ENCODE measurements at regions of chr11 and their contacts with region 1.

Region 1: GRCh38 chr11:42657169-42657568 is 654.6 kb upstream of the API5 start:
- DNase-seq: no peak
- ATAC-seq: no peak
- H3K4me3 ChIP-seq: no peak overlapping the region
- H3K27ac ChIP-seq: no peak overlapping the region
- H3K4me1 ChIP-seq: no peaks in the 10 kb centered on the region
- H3K27me3 ChIP-seq: no peaks in the 10 kb centered on the region
- CTCF ChIP-seq: no peak
- POLR2A ChIP-seq: no peak
- RAD21 ChIP-seq: no peak

Region 2: DNA sequence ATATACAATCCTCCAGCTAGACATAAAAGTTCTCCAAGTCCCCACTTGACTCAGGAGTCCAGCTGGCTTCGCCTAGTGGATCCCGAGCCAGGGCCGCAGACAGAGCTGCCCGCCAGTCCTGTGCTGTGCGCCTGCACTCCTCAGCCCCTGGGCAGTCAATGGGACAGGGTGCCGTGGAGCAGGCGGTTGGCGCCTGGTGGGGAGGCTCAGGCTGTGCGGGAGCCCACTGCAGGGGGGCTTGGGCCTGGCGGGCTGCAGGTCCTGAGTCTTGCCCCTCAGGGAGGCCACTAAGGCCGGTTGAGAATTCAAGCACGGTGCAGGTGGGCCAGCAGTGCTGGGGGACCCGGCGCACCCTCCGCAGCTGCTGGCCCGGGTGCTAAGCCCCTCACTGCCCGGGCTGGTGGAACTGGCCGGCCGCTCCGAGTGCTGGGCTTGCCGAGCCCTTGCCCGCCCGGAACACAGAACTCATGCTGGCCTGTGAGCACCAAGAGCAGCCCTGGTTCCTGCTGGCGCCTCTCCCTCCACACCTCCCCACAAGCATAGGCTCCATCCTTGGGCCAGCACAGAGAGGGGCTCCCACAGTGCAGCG is 312.9 kb before region 1 on chr11:
- CTCF ChIA-PET with region 1: no interaction called
- POLR2A ChIA-PET with region 1: no interaction called
- RAD21 ChIA-PET with region 1: no interaction called
- intact Hi-C with region 1: no loop called
- DNase-seq: no peak
- ATAC-seq: no peak
- H3K4me3 ChIP-seq: no peak overlapping the region
- H3K27ac ChIP-seq: no peak overlapping the region
- H3K4me1 ChIP-seq: no peaks in the 10 kb centered on the region
- H3K27me3 ChIP-seq: no peaks in the 10 kb centered on the region
- CTCF ChIP-seq: no peak
- POLR2A ChIP-seq: no peak
- RAD21 ChIP-seq: no peak

Region 3: DNA sequence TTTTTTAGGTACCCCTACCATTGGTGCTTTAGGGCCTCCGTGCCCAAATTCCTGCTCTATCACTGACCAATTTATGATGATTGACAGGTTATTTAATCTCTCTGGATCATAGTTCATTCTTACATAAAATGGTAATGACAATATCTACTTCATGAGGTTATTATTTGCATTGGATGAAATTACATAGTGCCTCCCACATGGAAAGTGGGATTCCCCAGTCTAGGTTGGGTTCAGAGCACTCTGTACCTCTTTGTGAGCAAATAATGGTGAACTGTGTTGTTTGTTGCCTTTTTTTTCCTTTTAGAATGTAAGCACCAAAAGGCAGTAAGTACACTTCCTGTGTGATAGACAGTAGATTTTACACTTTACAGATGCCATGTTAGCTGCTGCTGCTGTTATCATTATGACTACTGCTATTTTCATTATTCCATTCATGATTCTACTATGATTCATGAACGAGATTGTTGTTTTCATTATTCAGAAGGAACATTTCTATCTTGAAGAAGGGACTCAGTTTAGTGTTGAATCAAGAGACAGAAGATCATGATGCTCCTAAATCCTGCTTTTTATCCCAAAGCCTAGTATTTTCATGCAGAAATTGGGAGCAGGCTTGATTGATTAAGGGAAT is 1551.9 kb after region 1 on chr11:
- CTCF ChIA-PET with region 1: no interaction called
- POLR2A ChIA-PET with region 1: no interaction called
- RAD21 ChIA-PET with region 1: no interaction called
- intact Hi-C with region 1: loop called (anchors 10 kb)
- DNase-seq: no peak
- ATAC-seq: no peak
- H3K4me3 ChIP-seq: no peak overlapping the region
- H3K27ac ChIP-seq: no peak overlapping the region
- H3K4me1 ChIP-seq: no peaks in the 10 kb centered on the region
- H3K27me3 ChIP-seq: no peaks in the 10 kb centered on the region
- CTCF ChIP-seq: no peak
- POLR2A ChIP-seq: no peak
- RAD21 ChIP-seq: no peak

Measured in HCT116 (cell line).